Endothelial cell of umbilical vein (primary cell): ENCODE measurements at regions of chr3 and their contacts with region 1.

Region 1: DNA sequence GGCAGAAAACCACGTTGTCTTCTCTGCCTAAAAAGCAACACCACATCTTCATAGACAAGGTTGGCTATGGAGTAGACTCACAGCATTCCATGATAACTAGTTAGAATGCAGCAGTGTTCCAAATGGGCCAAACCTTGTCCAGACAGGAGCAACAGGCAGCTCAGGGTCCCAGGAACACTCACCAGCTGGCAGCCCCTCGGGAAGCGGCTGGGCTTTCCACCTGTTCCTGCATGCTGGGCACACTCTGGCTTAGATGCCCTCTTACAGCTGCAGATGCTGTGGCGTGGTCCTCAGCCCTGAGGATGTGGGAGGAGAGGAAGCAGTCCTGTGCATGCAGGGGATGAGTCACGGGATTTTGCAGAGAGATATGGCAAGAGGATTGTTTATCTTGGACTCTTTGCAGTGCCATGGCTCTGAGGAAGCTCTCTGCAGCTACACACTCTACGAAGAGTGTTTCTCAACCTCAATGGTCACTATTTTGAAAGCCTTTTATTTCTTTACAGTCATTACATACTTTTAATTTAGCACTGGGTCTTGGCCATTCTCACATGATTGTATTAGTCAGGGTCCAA is 11.3 kb downstream of the NRROS start:
- DNase-seq: peak; percentile 98
- H3K4me3 ChIP-seq: no peak overlapping the region
- H3K27ac ChIP-seq: no peak overlapping the region
- H3K4me1 ChIP-seq: peaks cover 24% of the 10 kb centered on the region
- H3K27me3 ChIP-seq: no peaks in the 10 kb centered on the region
- CTCF ChIP-seq: no peak
- POLR2A ChIP-seq: no peak

Region 2: GRCh38 chr3:196600359-196600758 is 50.5 kb before region 1 on chr3:
- CTCF ChIA-PET with region 1: no interaction called
- POLR2A ChIA-PET with region 1: no interaction called
- dilution Hi-C with region 1: no loop called
- intact Hi-C with region 1: no loop called
- DNase-seq: no peak
- H3K4me3 ChIP-seq: no peak overlapping the region
- H3K27ac ChIP-seq: no peak overlapping the region
- H3K4me1 ChIP-seq: no peaks in the 10 kb centered on the region
- H3K27me3 ChIP-seq: peaks cover 6 to 8% of the 10 kb centered on the region in 2 experiments
- CTCF ChIP-seq: no peak
- POLR2A ChIP-seq: no peak

Region 3: DNA sequence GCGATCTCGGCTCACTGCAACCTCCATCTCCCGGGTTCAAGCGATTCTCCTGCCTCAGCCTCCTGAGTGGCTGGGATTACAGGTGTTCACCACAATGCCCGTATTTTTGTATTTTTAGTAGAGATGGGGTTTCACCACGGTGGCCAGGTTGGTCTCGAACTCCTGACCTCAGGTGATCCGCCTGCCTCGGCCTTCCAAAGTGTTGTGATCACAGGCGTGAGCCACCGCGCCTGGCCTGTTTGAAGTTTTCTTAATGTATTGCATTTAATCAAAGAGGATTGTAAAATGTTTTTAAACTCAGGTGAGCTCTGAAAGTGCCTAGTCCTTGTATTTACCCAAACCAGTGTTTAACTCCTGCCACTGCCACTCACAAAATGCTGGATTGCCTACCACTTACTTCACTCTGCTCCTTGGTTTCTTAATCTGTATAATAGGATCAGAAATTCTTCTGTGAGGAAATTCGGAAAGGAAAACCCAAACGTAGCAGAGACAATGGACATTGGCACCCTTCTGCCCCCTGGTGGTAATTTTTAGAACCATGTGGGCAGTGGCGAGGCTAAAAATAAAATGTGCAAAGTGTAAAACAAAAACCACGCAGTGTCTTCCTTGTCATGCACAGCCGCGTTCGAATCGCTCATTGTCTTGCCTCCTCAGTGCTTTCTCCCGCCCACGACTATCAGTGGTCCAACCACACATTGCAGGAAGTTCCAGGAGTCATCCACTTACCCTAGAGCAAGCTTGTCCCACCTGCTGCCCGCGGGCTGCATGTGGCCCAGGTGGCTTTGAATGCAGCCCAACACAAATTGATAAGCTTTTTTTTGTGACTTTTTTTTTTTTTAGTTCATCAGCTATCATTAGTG is 34.0 kb after region 1 on chr3:
- CTCF ChIA-PET with region 1: interaction called, 5 read pairs
- POLR2A ChIA-PET with region 1: no interaction called
- dilution Hi-C with region 1: no loop called
- intact Hi-C with region 1: loop called (anchors 1 kb)
- DNase-seq: peak; percentile 61
- H3K4me3 ChIP-seq: no peak overlapping the region
- H3K27ac ChIP-seq: no peak overlapping the region
- H3K4me1 ChIP-seq: peaks cover 7% of the 10 kb centered on the region
- H3K27me3 ChIP-seq: peaks cover 0 to 3% of the 10 kb centered on the region in 2 experiments
- CTCF ChIP-seq: peak; percentile 73
- POLR2A ChIP-seq: no peak

Region 4: GRCh38 chr3:196694941-196695848 is 44.4 kb after region 1 on chr3:
- CTCF ChIA-PET with region 1: no interaction called
- POLR2A ChIA-PET with region 1: no interaction called
- dilution Hi-C with region 1: no loop called
- intact Hi-C with region 1: no loop called
- DNase-seq: no peak
- H3K4me3 ChIP-seq: no peak overlapping the region
- H3K27ac ChIP-seq: no peak overlapping the region
- H3K4me1 ChIP-seq: no peaks in the 10 kb centered on the region
- H3K27me3 ChIP-seq: peaks cover 0 to 2% of the 10 kb centered on the region in 2 experiments
- CTCF ChIP-seq: no peak
- POLR2A ChIP-seq: no peak